GM12878 (cell line): ENCODE measurements at regions of chr5 and their contacts with region 1.

Region 1: DNA sequence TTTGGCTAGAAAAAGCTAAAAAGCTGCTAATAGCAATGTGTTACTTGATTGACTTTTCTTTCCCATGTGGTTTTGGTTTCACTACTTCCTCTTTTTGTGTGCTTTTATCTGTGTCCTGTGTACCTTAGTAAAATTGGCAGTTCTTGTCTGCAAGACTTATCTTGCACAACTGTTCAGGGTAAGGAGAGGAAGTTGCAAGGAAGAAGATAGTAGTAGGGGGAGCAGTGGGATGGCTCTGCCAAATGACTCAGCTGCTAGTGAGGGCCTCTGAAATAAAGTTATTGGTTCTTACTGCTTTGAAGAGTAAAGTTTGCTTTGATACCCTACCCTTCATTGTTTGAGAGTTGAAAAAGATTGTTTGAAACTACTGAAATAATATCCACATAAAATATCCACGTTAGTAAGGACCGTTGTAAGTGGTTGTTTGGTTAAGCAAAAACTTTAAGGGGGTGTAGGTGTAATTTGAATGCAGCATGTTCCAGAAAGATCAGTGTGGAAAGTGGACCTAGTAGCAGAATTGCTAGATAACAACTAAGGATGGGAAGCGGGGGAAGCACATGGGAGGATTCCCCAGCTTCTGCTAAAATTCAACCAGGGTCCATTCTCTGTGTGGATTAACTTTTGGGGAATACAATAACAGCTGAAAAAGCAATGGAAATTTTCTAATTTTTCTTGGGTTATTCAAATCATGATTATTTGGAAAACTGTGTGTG is 123.5 kb downstream of the SCAMP1 start:
- DNase-seq: peak; percentile 69
- ATAC-seq: peak; percentile 97
- H3K4me3 ChIP-seq: no peak overlapping the region
- H3K27ac ChIP-seq: peak overlapping the region; percentile 28; the same call in 1 of the 2 replicates
- H3K4me1 ChIP-seq: peaks cover 15% of the 10 kb centered on the region
- H3K27me3 ChIP-seq: no peaks in the 10 kb centered on the region
- CTCF ChIP-seq: no peak
- EP300 ChIP-seq: 0 out of 4 replicates have a peak, but pooled peaks of 1 of the 2 experiments have one; percentile 24
- POLR2A ChIP-seq: no peak
- RAD21 ChIP-seq: no peak

Region 2: DNA sequence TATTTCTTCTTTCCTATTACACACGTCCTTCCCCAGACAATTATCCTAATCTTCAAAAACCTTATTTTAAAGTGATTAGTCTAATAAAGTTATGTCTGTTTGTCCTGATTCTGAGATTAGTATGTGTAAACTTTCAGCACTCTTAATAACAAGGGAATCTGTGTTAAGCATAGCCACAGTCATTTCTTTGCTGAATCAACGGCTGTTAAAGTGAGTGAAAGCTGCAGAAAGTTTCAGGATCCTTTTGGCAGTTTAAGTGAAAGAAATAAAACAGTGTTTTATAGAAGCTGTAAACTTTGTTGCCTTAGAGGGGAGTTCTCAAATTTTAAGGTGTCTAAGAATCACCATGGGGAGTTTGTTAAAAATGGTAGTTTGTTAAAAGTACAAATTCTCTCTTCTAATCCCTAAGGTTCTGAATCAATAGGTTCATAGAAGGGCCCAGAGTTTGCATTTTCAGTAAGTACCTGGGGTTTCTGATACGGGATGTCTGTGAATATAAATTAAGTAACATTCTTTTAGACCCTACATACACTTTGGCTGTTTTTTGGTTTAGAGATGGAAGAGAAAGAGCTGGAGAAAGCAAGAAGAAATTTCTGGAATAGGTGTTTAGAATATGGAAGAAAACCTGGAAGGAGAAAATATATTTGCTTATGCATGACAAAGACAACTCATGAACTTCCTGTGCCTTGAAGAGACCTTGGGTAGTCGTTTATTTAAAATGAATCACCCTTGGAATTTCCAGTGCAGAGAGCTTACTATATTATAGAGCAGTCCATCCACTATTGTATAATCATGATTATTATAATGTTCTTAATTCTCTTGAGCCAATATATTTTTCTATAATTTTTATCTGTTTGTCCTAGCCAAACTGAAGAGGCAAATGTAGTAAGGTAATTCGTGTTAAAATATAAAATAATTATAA is 77.9 kb before region 1 on chr5:
- CTCF ChIA-PET with region 1: no interaction called
- POLR2A ChIA-PET with region 1: no interaction called
- RAD21 ChIA-PET with region 1: no interaction called
- SMC1A ChIA-PET with region 1: no interaction called
- in situ Hi-C with region 1: no loop called
- intact Hi-C with region 1: no loop called
- DNase-seq: peak; percentile 19
- ATAC-seq: peak; percentile 76
- H3K4me3 ChIP-seq: peak overlapping the region; percentile 51; the same call in 1 of the 2 replicates
- H3K27ac ChIP-seq: peak overlapping the region; percentile 66
- H3K4me1 ChIP-seq: peaks cover 16% of the 10 kb centered on the region; the same call in 1 of the 2 replicates
- H3K27me3 ChIP-seq: no peaks in the 10 kb centered on the region
- CTCF ChIP-seq: no peak
- EP300 ChIP-seq: no peak
- POLR2A ChIP-seq: no peak
- RAD21 ChIP-seq: no peak

Region 3: GRCh38 chr5:78497573-78498533 is 13.9 kb after region 1 on chr5:
- CTCF ChIA-PET with region 1: interaction called, 3 read pairs
- POLR2A ChIA-PET with region 1: no interaction called
- RAD21 ChIA-PET with region 1: no interaction called
- SMC1A ChIA-PET with region 1: interaction called, 16 read pairs
- in situ Hi-C with region 1: no loop called
- intact Hi-C with region 1: no loop called
- DNase-seq: no peak
- ATAC-seq: peak; percentile 75
- H3K4me3 ChIP-seq: peak overlapping the region; percentile 9; the same call in 1 of the 2 replicates
- H3K27ac ChIP-seq: peak overlapping the region; percentile 73
- H3K4me1 ChIP-seq: peaks cover 27% of the 10 kb centered on the region
- H3K27me3 ChIP-seq: no peaks in the 10 kb centered on the region
- CTCF ChIP-seq: no peak
- EP300 ChIP-seq: peak in 1 of 2 experiments; percentile 39; a peak in 1 of 4 replicates
- POLR2A ChIP-seq: no peak
- RAD21 ChIP-seq: no peak